A549 (cell line): ENCODE measurements at regions of chr9 and their contacts with region 1.

Region 1: DNA sequence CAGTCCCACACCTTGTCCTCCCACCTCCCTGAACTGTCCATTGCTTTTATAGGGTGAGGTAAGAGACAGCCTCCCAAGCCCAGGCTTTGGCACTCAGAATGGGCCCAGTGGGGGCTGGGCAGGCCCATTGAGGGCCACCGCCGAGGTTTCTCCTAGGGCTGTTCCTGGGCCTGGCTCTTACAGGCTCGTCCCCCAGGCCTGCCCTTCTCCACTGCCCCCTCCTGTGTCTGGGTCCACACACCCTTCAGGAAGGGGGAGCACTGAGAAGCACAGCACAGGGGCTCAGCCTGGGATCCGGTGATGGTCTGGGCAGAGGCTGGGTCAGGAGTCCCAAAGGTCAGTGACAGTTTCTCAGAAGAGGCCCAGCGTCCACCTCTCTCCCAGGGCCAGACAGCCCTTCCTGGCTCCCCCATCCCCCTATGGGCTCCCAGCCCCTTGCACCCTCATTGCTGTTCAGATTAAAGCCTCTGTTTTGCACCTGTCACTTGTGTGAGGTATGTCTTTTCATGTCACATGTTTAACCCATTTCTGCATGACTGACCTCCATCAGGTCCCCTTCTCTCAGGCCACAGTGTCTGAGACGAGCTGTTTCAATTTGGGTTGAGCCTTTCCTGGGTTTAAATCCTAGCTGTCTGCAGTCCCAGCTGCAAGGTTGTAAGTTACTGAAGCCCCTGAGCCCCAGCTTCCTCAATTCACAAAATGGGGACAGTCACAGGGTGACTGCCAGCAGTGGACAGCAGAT is 29.4 kb downstream of the IER5L start:
- DNase-seq: no peak
- ATAC-seq: no peak
- H3K4me3 ChIP-seq: no peak overlapping the region
- H3K27ac ChIP-seq: peak overlapping the region in 1 of 2 experiments; percentile 82; a peak in 2 of 6 replicates
- H3K4me1 ChIP-seq: peaks cover 24% of the 10 kb centered on the region
- CTCF ChIP-seq: no peak
- EP300 ChIP-seq: no peak
- POLR2A ChIP-seq: no peak
- RAD21 ChIP-seq: no peak

Region 2: DNA sequence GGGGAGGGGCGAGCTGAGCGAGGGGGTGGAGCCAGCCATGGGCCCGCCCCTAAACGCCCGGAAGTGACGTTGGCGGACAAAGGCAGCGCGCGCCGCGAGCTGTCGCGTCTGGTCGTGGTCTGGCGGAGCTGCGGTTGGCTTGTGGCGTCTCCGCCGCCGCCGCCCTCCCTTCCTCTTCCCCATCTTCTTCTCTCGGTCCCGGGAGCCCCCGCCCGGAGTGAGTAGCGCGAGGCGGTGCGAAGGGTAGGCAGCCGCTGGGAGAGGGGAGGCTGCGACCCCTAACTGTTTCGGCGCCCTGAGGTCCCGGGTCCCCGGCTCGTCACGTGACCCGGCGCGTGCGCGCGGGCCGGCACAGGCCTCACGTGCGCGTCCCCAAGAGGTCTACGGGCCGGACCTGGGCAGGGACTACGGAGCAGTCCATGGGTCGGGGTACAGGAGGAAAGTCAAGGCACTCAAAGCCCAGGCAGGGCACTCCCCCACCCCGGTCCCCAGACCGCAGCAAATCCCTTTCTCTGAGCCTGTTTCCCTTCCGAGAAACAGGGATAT is 477.5 kb after region 1 on chr9 and contains the start of gene NTMT1:
- CTCF ChIA-PET with region 1: interaction called, 947 read pairs
- POLR2A ChIA-PET with region 1: no interaction called
- DNase-seq: peak; percentile 77 to 87
- ATAC-seq: peak; percentile 78 to 84
- H3K4me3 ChIP-seq: peak within 1 kb of the TSS; percentile 69
- H3K27ac ChIP-seq: peak within 1 kb of the TSS; percentile 78 to 98
- H3K4me1 ChIP-seq: peaks cover 28% of the 10 kb centered on the region
- CTCF ChIP-seq: no peak
- EP300 ChIP-seq: no peak
- POLR2A ChIP-seq: peak; percentile 93
- RAD21 ChIP-seq: no peak
- polyA plus RNA-seq, gene NTMT1: 39.2 and 49.4 TPM in 2 replicates